Caco-2 (cell line): ENCODE measurements at regions of chr4 and their contacts with region 1.

Region 1: GRCh38 chr4:181249031-181249430 is 994.2 kb upstream of the TENM3 start:
- DNase-seq: no peak
- H3K4me3 ChIP-seq: no peak overlapping the region
- H3K4me3 Mint-ChIP-seq: no peak overlapping the region
- H3K27ac Mint-ChIP-seq: no peak overlapping the region
- H3K4me1 ChIP-seq: no peaks in the 10 kb centered on the region
- H3K4me1 Mint-ChIP-seq: no peaks in the 10 kb centered on the region
- H3K27me3 ChIP-seq: no peaks in the 10 kb centered on the region
- H3K27me3 Mint-ChIP-seq: peaks cover 5% of the 10 kb centered on the region
- CTCF ChIP-seq: no peak

Region 2: GRCh38 chr4:181138116-181138515 is 110.9 kb before region 1 on chr4:
- CTCF ChIA-PET with region 1: no interaction called
- POLR2A ChIA-PET with region 1: no interaction called
- intact Hi-C with region 1: loop called (anchors 1 kb)
- DNase-seq: no peak
- H3K4me3 ChIP-seq: no peak overlapping the region
- H3K4me3 Mint-ChIP-seq: no peak overlapping the region
- H3K27ac Mint-ChIP-seq: no peak overlapping the region
- H3K4me1 ChIP-seq: no peaks in the 10 kb centered on the region
- H3K4me1 Mint-ChIP-seq: no peaks in the 10 kb centered on the region
- H3K27me3 ChIP-seq: no peaks in the 10 kb centered on the region
- H3K27me3 Mint-ChIP-seq: peaks cover 7% of the 10 kb centered on the region
- CTCF ChIP-seq: no peak

Region 3: DNA sequence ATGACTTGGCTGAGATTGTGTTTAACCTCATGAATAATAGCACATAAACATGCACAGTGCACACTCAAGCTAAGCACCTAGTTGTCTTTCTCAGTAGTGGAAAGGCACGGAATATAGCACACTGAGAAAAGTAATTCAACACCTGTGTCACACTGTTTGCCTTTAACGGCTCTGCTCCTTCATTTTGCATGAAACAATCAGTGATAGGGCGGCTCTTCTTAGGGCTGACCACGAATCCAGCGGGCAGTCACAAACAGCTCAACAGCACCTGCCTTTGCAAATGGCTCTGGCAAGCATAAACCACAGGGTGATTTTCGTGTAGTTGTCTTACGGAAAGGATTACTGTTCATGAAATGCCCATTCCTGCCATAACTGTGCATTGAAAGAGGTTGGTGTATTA is 40.2 kb after region 1 on chr4:
- CTCF ChIA-PET with region 1: no interaction called
- POLR2A ChIA-PET with region 1: no interaction called
- intact Hi-C with region 1: no loop called
- DNase-seq: no peak
- H3K4me3 ChIP-seq: no peak overlapping the region
- H3K4me3 Mint-ChIP-seq: no peak overlapping the region
- H3K27ac Mint-ChIP-seq: no peak overlapping the region
- H3K4me1 ChIP-seq: no peaks in the 10 kb centered on the region
- H3K4me1 Mint-ChIP-seq: no peaks in the 10 kb centered on the region
- H3K27me3 ChIP-seq: no peaks in the 10 kb centered on the region
- H3K27me3 Mint-ChIP-seq: peaks cover 11% of the 10 kb centered on the region
- CTCF ChIP-seq: no peak